ENCODE measurements at regions of chr3 and their contacts with region 1.

Region 1: GRCh38 chr3:12471243-12471651 is 13.0 kb upstream of the TSEN2 start:
- DNase-seq: peak; percentile 91
- H3K4me3 Mint-ChIP-seq: peak overlapping the region; percentile 8
- H3K27ac Mint-ChIP-seq: peak overlapping the region; percentile 64
- H3K4me1 Mint-ChIP-seq: peaks cover 37% of the 10 kb centered on the region
- H3K27me3 Mint-ChIP-seq: peaks cover 1% of the 10 kb centered on the region

Region 2: DNA sequence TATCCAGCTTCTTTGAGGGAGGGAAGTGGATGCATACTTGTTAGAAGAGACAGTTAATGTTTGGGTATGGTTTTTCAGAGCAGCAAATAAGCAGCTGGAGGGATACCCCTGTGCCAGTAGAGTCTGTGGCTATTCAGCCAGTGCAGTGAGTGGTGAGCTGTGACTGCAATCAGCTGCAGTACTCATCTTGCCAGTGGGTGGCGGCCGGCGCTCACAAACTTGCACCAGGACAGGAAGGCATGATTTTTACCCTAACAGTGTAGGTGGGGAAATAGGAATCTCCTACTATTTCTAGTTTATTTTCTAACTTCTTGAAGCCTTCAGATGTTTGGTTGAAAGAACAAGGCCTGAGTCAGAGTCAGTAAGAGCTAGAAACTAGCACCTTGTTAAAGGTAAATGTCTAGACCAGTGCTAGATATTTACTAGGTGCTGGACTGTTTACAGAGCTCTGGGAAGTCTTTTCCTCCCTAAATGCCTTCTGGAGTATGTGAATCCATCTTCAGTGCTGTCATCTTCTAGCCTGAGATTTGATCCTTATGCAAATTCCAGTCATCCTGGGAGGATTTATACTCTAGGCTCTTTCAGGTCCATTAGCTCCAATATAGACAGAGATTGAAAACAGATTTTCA is 336.1 kb before region 1 on chr3:
- CTCF ChIA-PET with region 1: interaction called, 274 read pairs
- POLR2A ChIA-PET with region 1: interaction called, 7 read pairs
- intact Hi-C with region 1: no loop called
- DNase-seq: peak; percentile 78
- H3K4me3 Mint-ChIP-seq: no peak overlapping the region
- H3K27ac Mint-ChIP-seq: no peak overlapping the region
- H3K4me1 Mint-ChIP-seq: no peaks in the 10 kb centered on the region
- H3K27me3 Mint-ChIP-seq: peaks cover 12% of the 10 kb centered on the region

Region 3: GRCh38 chr3:12149029-12149428 is 322.2 kb before region 1 on chr3:
- CTCF ChIA-PET with region 1: no interaction called
- POLR2A ChIA-PET with region 1: no interaction called
- intact Hi-C with region 1: no loop called
- DNase-seq: no peak
- H3K4me3 Mint-ChIP-seq: no peak overlapping the region
- H3K27ac Mint-ChIP-seq: no peak overlapping the region
- H3K4me1 Mint-ChIP-seq: no peaks in the 10 kb centered on the region
- H3K27me3 Mint-ChIP-seq: peaks cover 3% of the 10 kb centered on the region

Region 4: DNA sequence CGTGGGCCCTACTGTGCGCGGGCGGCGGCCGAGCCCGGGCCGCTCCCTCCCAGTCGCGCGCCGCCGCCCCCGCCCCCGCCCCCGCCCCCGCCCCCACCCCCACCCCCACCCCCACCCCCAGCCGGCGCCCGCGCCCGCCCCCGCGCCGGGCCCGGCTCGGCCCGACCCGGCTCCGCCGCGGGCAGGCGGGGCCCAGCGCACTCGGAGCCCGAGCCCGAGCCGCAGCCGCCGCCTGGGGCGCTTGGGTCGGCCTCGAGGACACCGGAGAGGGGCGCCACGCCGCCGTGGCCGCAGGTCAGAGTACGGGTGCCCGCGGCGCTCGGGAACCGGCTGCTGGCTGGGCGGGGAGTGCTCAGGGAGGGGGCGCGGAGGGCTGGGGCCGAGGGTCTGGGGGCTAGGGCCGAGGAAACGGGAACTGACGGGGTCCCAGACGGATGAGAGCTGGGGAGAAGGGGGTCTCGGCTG is 183.5 kb before region 1 on chr3:
- CTCF ChIA-PET with region 1: no interaction called
- POLR2A ChIA-PET with region 1: no interaction called
- intact Hi-C with region 1: loop called (anchors 5 kb)
- DNase-seq: peak; percentile 19
- H3K4me3 Mint-ChIP-seq: peak overlapping the region; percentile 43
- H3K27ac Mint-ChIP-seq: no peak overlapping the region
- H3K4me1 Mint-ChIP-seq: peaks cover 10% of the 10 kb centered on the region
- H3K27me3 Mint-ChIP-seq: peaks cover 43% of the 10 kb centered on the region

Region 5: DNA sequence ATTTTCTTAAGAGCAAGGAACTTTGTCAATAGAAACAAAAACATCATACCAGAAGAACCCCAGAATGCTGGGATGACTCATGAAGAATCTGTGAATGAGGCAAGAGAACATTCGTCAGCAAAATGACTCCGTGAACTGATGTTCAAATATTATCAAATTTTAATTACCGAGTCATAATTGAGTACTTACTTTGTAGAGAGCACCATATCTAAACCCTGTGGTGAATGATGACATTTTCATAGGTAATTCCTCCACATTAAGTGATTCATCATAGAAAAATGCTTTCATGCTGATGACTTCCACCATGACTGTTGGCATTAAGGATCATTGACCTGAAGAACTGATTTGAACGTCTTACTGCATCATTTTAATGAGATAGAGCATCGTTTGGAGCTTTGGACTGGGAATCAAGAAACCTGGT is 126.1 kb before region 1 on chr3:
- CTCF ChIA-PET with region 1: no interaction called
- POLR2A ChIA-PET with region 1: no interaction called
- intact Hi-C with region 1: loop called (anchors 1 kb)
- DNase-seq: no peak
- H3K4me3 Mint-ChIP-seq: peak overlapping the region; percentile 4
- H3K27ac Mint-ChIP-seq: peak overlapping the region; percentile 31
- H3K4me1 Mint-ChIP-seq: peaks cover 9% of the 10 kb centered on the region
- H3K27me3 Mint-ChIP-seq: peaks cover 14% of the 10 kb centered on the region

Region 6: DNA sequence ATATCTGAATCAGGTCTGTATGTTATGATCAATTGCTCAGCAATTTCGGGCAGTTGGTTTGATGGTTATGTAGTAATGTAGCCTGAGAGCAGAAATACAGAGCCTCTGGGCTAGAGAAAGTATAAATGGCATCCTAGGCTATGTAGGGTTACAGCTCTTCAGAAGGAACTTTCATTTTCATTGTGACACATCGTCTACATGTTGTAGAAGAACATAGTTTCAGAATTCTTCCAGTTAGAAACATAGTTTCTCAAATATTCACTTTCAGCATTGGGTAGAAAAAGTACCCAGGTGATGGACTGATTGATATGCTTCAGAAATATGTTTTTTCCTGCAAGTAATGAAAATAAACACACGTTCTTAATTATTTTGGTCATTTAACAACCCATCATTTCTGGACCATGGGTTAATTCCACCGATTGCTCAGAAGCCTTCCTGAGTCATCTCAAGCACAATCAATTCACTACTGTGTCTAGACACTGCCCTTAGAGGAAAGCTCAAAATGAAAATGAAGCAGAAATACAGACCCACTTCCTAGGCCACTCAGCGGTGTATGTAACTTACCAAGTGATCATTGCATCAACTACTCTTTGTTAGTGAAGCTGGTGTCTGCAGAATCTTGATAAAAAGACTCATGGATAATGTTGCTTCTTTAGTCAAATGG is 75.8 kb before region 1 on chr3:
- CTCF ChIA-PET with region 1: interaction called, 6 read pairs
- POLR2A ChIA-PET with region 1: interaction called, 3 read pairs
- intact Hi-C with region 1: loop called (anchors 1 kb)
- DNase-seq: peak; percentile 46
- H3K4me3 Mint-ChIP-seq: peak overlapping the region; percentile 20
- H3K27ac Mint-ChIP-seq: peak overlapping the region; percentile 40
- H3K4me1 Mint-ChIP-seq: peaks cover 16% of the 10 kb centered on the region
- H3K27me3 Mint-ChIP-seq: peaks cover 27% of the 10 kb centered on the region

Region 7: GRCh38 chr3:12423918-12424630 is 47.2 kb before region 1 on chr3:
- CTCF ChIA-PET with region 1: no interaction called
- POLR2A ChIA-PET with region 1: no interaction called
- intact Hi-C with region 1: loop called (anchors 5 kb)
- DNase-seq: peak; percentile 63
- H3K4me3 Mint-ChIP-seq: no peak overlapping the region
- H3K27ac Mint-ChIP-seq: no peak overlapping the region
- H3K4me1 Mint-ChIP-seq: peaks cover 39% of the 10 kb centered on the region
- H3K27me3 Mint-ChIP-seq: peaks cover 19% of the 10 kb centered on the region

Region 8: GRCh38 chr3:12440927-12441326 is 30.3 kb before region 1 on chr3:
- CTCF ChIA-PET with region 1: no interaction called
- POLR2A ChIA-PET with region 1: no interaction called
- intact Hi-C with region 1: no loop called
- DNase-seq: no peak
- H3K4me3 Mint-ChIP-seq: no peak overlapping the region
- H3K27ac Mint-ChIP-seq: no peak overlapping the region
- H3K4me1 Mint-ChIP-seq: no peaks in the 10 kb centered on the region
- H3K27me3 Mint-ChIP-seq: peaks cover 4% of the 10 kb centered on the region

Region 9: DNA sequence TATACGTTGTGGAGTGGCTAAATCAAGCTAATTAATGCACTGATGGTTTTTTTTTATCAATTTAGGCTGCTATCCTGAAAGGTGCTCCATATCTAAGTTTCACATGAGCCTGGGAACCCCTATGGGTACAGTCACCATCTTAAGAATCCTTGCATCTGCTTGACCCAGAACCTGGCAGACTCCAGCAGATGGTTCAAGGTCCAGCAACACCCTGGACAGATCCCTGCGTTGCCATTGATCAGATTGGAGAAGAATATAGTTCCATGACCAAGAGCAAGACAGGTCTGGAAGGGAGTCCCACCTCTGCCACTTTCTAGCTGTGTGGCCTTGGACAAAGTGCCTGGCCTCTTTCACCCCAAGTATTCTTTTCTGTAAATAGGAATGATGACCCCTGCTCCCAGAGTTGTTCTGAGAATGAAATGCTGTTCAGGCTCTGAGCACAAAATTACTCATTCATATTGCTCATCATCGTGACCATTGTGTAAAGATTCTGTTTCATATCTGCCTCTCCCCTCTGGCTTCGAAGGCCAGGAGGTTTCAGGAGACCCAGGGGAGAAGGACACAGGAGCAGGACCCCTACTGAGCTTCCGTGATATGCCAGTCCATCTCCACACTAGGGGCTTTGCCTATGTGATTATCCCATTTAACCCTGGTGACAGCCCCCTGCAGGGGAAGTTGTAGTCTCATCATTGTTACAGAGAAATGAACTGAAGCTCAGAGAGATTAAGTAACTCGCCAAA is 17.0 kb before region 1 on chr3:
- CTCF ChIA-PET with region 1: interaction called, 3 read pairs
- POLR2A ChIA-PET with region 1: no interaction called
- intact Hi-C with region 1: loop called (anchors 2 kb)
- DNase-seq: no peak
- H3K4me3 Mint-ChIP-seq: no peak overlapping the region
- H3K27ac Mint-ChIP-seq: no peak overlapping the region
- H3K4me1 Mint-ChIP-seq: peaks cover 10% of the 10 kb centered on the region
- H3K27me3 Mint-ChIP-seq: no peaks in the 10 kb centered on the region

Region 10: DNA sequence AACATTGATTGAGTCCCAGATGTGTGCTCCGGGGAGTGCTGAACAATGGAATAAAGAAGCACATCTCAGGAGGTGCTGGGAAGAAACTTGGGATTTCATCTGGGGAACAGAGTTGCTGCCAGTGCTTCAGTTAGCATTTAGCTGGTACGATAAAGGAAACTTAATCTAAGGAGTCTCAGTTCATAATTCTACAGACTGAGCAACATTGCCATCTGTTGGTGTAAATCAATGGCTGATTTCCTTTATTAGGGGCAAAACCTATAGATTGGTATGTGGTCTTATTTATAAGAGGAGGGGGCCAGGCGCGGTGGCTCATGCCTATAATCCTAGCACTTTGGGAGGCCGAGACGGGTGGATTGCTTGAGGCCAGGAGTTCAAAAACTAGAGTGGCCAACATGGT is 65.2 kb after region 1 on chr3:
- CTCF ChIA-PET with region 1: no interaction called
- POLR2A ChIA-PET with region 1: no interaction called
- intact Hi-C with region 1: no loop called
- DNase-seq: no peak
- H3K4me3 Mint-ChIP-seq: no peak overlapping the region
- H3K27ac Mint-ChIP-seq: no peak overlapping the region
- H3K4me1 Mint-ChIP-seq: peaks cover 5% of the 10 kb centered on the region
- H3K27me3 Mint-ChIP-seq: no peaks in the 10 kb centered on the region

Measured in activated CD4-positive, alpha-beta memory T cell treated with anti-CD3 and anti-CD28 coated beads for 36 hours (primary cell).